ENCODE measurements at regions of chr9 and their contacts with region 1.

Region 1: GRCh38 chr9:69971643-69972449 is 71.8 kb upstream of the MAMDC2 start:
- DNase-seq: peak; percentile 69
- H3K4me3 ChIP-seq: peak overlapping the region in 1 of 2 experiments; percentile 53; a peak in 1 of 4 replicates
- H3K27ac ChIP-seq: peak overlapping the region in 1 of 2 experiments; percentile 53; a peak in 2 of 4 replicates
- H3K4me1 ChIP-seq: peaks cover 0 to 16% of the 10 kb centered on the region in 2 experiments; a peak in 3 of 4 replicates
- H3K27me3 ChIP-seq: no peaks in the 10 kb centered on the region
- CTCF ChIP-seq: peak; percentile 97
- EP300 ChIP-seq: no peak
- RAD21 ChIP-seq: peak; percentile 92

Region 2: GRCh38 chr9:69961830-69962229 is 10.0 kb before region 1 on chr9:
- CTCF ChIA-PET with region 1: interaction called, 19 read pairs
- POLR2A ChIA-PET with region 1: no interaction called
- DNase-seq: peak; percentile 13
- H3K4me3 ChIP-seq: no peak overlapping the region
- H3K27ac ChIP-seq: no peak overlapping the region
- H3K4me1 ChIP-seq: peaks cover 0 to 6% of the 10 kb centered on the region in 2 experiments; a peak in 2 of 4 replicates
- H3K27me3 ChIP-seq: no peaks in the 10 kb centered on the region
- CTCF ChIP-seq: no peak
- EP300 ChIP-seq: no peak
- RAD21 ChIP-seq: no peak

Region 3: DNA sequence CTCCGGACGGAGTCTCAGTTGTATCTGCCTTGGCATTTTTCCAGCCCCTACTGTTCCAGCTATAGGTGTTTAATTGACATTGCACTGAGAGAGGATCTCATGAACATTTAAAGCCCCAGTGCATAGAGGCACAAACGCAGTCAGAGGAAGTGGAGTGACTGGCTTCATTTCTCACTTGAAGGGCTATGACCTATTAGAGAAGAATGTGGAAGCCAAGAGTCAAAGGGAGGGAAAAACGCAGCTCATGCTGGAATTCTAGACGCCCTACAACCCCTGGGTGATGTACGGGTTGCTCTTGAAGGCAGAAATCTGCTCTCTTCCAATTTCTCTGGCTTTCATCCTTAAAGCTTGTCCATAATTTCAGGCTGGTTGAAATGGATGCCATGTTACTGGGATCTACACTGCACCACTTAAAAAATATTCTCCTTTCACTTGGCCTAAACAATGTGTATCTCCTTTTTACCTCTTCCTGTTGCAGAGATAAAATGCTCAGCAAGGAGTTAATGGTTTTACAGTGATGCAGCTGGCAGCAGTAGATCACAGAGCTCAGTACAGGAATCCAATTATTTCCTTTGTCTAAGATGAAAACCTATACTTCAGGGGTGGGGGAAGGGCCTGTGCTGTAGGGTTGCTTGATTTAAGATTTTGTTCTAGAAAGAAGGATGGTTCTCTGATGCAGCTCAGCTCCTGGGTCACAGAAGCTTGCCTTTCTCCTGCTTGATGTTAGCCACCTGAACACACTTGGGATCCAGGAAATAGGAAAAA is 10.0 kb after region 1 on chr9:
- CTCF ChIA-PET with region 1: interaction called, 24 read pairs
- POLR2A ChIA-PET with region 1: no interaction called
- DNase-seq: no peak
- H3K4me3 ChIP-seq: no peak overlapping the region
- H3K27ac ChIP-seq: peak overlapping the region in 1 of 2 experiments; percentile 51; a peak in 2 of 4 replicates
- H3K4me1 ChIP-seq: peaks cover 3 to 14% of the 10 kb centered on the region in 2 experiments; a peak in 3 of 4 replicates
- H3K27me3 ChIP-seq: no peaks in the 10 kb centered on the region
- CTCF ChIP-seq: no peak
- EP300 ChIP-seq: no peak
- RAD21 ChIP-seq: no peak

Region 4: GRCh38 chr9:70120834-70121510 is 149.1 kb after region 1 on chr9:
- CTCF ChIA-PET with region 1: interaction called, 433 read pairs
- POLR2A ChIA-PET with region 1: no interaction called
- DNase-seq: peak; percentile 30
- H3K4me3 ChIP-seq: no peak overlapping the region
- H3K27ac ChIP-seq: peak overlapping the region in 1 of 2 experiments; percentile 87
- H3K4me1 ChIP-seq: peaks cover 10 to 23% of the 10 kb centered on the region in 2 experiments
- H3K27me3 ChIP-seq: no peaks in the 10 kb centered on the region
- CTCF ChIP-seq: peak; percentile 56
- EP300 ChIP-seq: peak in 1 of 2 experiments; percentile 80; a peak in 1 of 4 replicates
- RAD21 ChIP-seq: peak; percentile 43

Region 5: GRCh38 chr9:70229579-70229978 is 257.7 kb after region 1 on chr9:
- CTCF ChIA-PET with region 1: interaction called, 28 read pairs
- POLR2A ChIA-PET with region 1: no interaction called
- DNase-seq: no peak
- H3K4me3 ChIP-seq: no peak overlapping the region
- H3K27ac ChIP-seq: no peak overlapping the region; a peak in 1 of 4 replicates
- H3K4me1 ChIP-seq: no peaks in the 10 kb centered on the region
- H3K27me3 ChIP-seq: no peaks in the 10 kb centered on the region
- CTCF ChIP-seq: peak; percentile 67
- EP300 ChIP-seq: no peak
- RAD21 ChIP-seq: peak; percentile 70

Measured in SK-N-SH (cell line).